ENCODE measurements at regions of chr20 and their contacts with region 1.

Region 1: DNA sequence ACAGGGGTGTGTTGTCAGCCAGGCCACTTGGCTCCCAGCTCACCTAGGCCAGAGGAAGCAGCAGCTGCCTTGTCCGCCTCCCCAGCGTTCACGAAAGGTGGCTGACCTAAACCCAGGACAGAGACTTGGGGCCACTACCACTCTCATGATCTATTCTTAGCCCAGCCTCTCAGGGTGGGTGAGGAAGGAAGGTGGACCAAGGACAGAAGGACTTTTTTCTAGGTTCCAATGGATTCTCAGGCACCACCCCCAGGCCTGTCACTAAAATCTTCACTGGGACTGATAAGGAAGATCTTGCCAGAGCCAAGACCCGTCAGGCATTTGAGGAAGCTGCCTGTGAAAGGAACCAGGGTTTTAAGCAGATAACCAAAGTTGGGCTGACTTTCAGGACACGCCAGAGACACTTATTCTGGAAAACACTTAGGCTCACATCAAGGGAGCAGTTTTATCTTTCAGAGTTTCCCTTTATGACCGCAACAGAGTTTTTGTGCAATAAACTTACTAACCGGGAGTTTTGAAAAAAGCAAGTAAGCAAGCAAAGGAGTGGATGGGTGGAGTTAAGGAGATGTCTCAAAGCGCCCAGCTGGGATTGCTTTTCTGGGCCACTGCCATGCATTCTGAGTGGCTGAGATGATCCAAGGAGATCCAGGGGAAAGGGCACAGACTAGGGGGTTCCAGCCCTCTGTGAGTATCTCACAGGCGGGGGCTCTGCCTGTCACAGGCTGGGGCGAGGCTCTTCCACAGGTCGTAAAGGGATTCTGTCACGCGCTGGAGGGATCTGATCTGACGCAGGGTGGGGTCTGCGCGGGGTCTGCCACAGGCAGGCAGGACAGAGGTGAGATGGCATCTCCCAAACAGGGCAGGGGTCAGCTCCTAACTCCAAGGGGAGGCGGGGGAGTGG is 989 bp downstream of the FITM2 start:
- DNase-seq: peak; percentile 36 to 40
- H3K4me3 ChIP-seq: peak overlapping the region; percentile 85 to 95
- H3K27ac ChIP-seq: peak overlapping the region; percentile 67 to 68
- H3K4me1 ChIP-seq: peaks cover 0 to 3% of the 10 kb centered on the region in 2 donors
- H3K27me3 ChIP-seq: no peaks in the 10 kb centered on the region
- CTCF ChIP-seq: no peak
- POLR2A ChIP-seq: no peak

Region 2: DNA sequence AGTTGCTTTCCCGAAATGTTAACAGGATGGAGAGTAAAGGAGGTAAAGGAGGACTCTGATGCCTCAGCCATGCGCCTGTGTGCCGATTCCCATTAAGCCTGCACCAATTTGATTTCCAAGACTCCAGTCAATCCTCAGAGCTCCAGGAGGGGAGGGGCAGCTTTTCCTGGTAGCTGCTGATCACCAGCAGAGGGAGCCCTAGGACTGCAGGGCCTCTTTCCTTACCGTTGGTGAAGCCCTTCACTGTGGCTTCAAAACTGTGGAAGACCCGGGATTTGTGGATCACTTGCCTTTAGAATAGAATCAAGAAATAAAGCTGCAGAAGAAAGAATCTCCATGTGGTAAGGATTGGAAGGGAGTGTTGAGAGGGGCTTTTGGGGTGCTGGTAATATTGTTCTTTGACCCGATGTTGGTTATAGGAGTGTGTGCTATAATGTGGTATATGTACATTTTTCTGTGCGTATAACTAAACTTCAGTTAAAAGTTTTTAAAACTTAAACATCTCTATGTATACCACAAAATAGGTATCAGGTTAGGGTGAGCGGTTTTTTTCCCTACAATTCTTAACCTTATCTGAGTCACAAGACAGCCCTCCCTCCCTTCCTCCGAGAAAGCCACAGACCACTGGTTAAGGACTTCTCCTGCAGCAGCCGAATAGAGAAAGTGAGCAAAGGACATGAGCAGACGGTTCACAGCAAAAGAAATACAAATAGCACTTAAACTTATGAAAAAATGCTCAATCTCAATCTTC is 92.5 kb before region 1 on chr20:
- intact Hi-C with region 1: loop called (anchors 5 kb)
- DNase-seq: peak; percentile 32 to 36
- H3K4me3 ChIP-seq: no peak overlapping the region
- H3K27ac ChIP-seq: no peak overlapping the region
- H3K4me1 ChIP-seq: peaks cover 3 to 4% of the 10 kb centered on the region in 2 donors
- H3K27me3 ChIP-seq: no peaks in the 10 kb centered on the region
- CTCF ChIP-seq: peak; percentile 43 to 63 (median 50)
- POLR2A ChIP-seq: no peak